HepG2 (cell line): ENCODE measurements at regions of chr2 and their contacts with region 1.

Region 1: GRCh38 chr2:36663851-36664695 is 32.4 kb upstream of the VIT start:
- DNase-seq: peak; percentile 81
- ATAC-seq: peak; percentile 88
- H3K4me3 ChIP-seq: no peak overlapping the region
- H3K27ac ChIP-seq: no peak overlapping the region
- H3K4me1 ChIP-seq: peaks cover 39% of the 10 kb centered on the region
- H3K27me3 ChIP-seq: no peaks in the 10 kb centered on the region
- CTCF ChIP-seq: peak; percentile 89
- EP300 ChIP-seq: no peak
- POLR2A ChIP-seq: no peak
- RAD21 ChIP-seq: peak; percentile 71

Region 2: DNA sequence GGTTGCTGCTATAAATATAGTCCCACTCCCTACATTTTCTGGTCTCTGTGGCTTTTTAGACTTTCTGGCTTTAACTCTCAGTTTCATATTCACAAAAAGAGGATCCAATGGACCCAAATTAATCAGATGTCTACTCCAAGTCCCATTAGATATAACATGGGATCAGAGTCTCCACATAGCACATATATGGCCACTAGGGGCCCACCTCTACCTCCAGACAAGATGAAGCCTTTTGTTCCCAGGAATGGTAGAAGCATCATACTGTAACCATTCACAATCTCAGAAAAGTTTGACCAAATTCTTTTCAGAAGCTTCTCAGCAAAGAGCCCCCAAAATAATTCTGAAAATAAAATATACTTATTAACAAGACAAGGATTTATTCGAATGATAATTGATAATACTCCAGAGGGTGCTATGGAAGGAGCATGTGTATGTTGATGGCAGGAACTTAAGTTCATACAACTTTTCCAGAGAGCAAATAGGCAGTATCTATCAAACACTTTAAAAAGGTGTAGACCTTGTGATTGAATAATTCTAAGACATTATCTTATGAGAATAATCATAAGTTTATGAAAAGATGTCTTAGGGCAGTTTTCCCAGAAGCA is 690.8 kb before region 1 on chr2:
- CTCF ChIA-PET with region 1: interaction called, 3 read pairs
- POLR2A ChIA-PET with region 1: no interaction called
- in situ Hi-C with region 1: no loop called
- intact Hi-C with region 1: loop called (anchors 1 kb)
- DNase-seq: peak; percentile 46
- ATAC-seq: peak; percentile 98
- H3K4me3 ChIP-seq: no peak overlapping the region
- H3K27ac ChIP-seq: no peak overlapping the region
- H3K4me1 ChIP-seq: no peaks in the 10 kb centered on the region
- H3K27me3 ChIP-seq: no peaks in the 10 kb centered on the region
- CTCF ChIP-seq: peak; percentile 69
- EP300 ChIP-seq: no peak
- POLR2A ChIP-seq: no peak
- RAD21 ChIP-seq: peak; percentile 39

Region 3: DNA sequence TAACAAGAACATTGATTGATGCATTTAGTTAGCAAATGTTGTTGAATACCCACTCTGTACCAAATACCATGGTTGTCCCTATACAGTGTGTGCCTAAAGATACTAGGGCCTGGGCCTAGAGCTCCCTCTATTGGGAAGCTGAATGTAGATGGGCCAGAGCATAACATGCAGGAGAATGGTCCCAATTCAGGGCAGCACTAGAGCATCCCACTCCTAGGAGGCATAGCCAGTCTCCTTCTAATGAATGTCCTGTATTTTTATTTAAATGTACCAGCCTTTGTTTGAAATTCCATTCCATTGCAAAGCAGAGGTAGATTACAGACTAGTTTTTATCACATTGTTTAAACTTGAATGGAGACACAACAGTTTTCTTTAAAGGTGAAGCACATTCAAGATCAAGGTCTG is 156.7 kb before region 1 on chr2:
- CTCF ChIA-PET with region 1: no interaction called
- POLR2A ChIA-PET with region 1: no interaction called
- in situ Hi-C with region 1: no loop called
- intact Hi-C with region 1: loop called (anchors 5 kb)
- DNase-seq: peak; percentile 79
- ATAC-seq: peak; percentile 92
- H3K4me3 ChIP-seq: no peak overlapping the region
- H3K27ac ChIP-seq: no peak overlapping the region
- H3K4me1 ChIP-seq: peaks cover 41% of the 10 kb centered on the region
- H3K27me3 ChIP-seq: no peaks in the 10 kb centered on the region
- CTCF ChIP-seq: peak; percentile 91
- EP300 ChIP-seq: no peak
- POLR2A ChIP-seq: no peak
- RAD21 ChIP-seq: peak; percentile 86

Region 4: GRCh38 chr2:36544638-36545338 is 119.3 kb before region 1 on chr2:
- CTCF ChIA-PET with region 1: no interaction called
- POLR2A ChIA-PET with region 1: no interaction called
- in situ Hi-C with region 1: loop called (anchors 10 kb)
- intact Hi-C with region 1: loop called (anchors 5 kb)
- DNase-seq: no peak
- ATAC-seq: peak; percentile 32; the same call in 1 of the 3 replicates
- H3K4me3 ChIP-seq: no peak overlapping the region
- H3K27ac ChIP-seq: no peak overlapping the region
- H3K4me1 ChIP-seq: no peaks in the 10 kb centered on the region
- H3K27me3 ChIP-seq: no peaks in the 10 kb centered on the region
- CTCF ChIP-seq: no peak
- EP300 ChIP-seq: no peak
- POLR2A ChIP-seq: no peak
- RAD21 ChIP-seq: no peak

Region 5: DNA sequence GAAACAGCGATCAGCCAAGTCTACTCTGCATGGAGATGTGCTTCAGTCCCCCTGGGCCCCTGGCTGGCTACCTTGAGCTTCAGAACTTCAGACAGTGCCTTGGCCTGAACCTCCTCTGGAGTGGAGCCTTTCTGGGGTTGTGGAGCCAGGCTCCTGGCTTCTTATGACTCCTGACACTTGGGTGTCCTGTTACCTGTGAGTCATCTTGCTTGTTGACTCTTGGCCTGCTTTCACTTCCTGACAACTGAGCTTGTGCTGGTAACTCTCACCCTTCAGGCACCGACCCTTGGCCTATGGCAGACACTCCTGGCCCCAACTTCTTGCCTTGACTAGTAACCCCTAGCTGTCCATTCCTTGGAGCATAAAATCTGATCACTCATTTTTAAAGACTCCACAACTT is 14.0 kb before region 1 on chr2:
- CTCF ChIA-PET with region 1: no interaction called
- POLR2A ChIA-PET with region 1: interaction called, 19 read pairs
- in situ Hi-C with region 1: no loop called
- intact Hi-C with region 1: no loop called
- DNase-seq: peak; percentile 83
- ATAC-seq: peak; percentile 92
- H3K4me3 ChIP-seq: peak overlapping the region in 1 of 3 experiments; percentile 38; a peak in 2 of 6 replicates
- H3K27ac ChIP-seq: peak overlapping the region; percentile 54
- H3K4me1 ChIP-seq: peaks cover 49% of the 10 kb centered on the region
- H3K27me3 ChIP-seq: no peaks in the 10 kb centered on the region
- CTCF ChIP-seq: no peak
- EP300 ChIP-seq: peak in 1 of 2 experiments; percentile 82; a peak in 2 of 4 replicates
- POLR2A ChIP-seq: peak in 1 of 2 experiments; percentile 41; a peak in 1 of 4 replicates
- RAD21 ChIP-seq: no peak